Activated T-helper 1 cell treated with anti-CD3 and anti-CD28 coated beads, Interleukin-12 subunit alpha, Interleukin-12 subunit beta, Interleukin-2, Interleukin-4 antibody, amounts not matched to agents 30 ng/mL and 10 ng/mL and 1 ng/mL, durations not matched to agents 14 hours and 24 hours and 36 hours (primary cell): ENCODE measurements at regions of chr18 and their contacts with region 1.

Region 1: GRCh38 chr18:63422087-63422809 is at the start of gene VPS4B:
- DNase-seq: peak; percentile 100
- H3K4me3 Mint-ChIP-seq: peak within 1 kb of the TSS; percentile 91
- H3K27ac Mint-ChIP-seq: peak within 1 kb of the TSS; percentile 92
- H3K4me1 Mint-ChIP-seq: peaks cover 18% of the 10 kb centered on the region
- H3K27me3 Mint-ChIP-seq: no peaks in the 10 kb centered on the region
- total RNA-seq, gene VPS4B: 58.6 and 60.7 TPM in 2 replicates

Region 2: DNA sequence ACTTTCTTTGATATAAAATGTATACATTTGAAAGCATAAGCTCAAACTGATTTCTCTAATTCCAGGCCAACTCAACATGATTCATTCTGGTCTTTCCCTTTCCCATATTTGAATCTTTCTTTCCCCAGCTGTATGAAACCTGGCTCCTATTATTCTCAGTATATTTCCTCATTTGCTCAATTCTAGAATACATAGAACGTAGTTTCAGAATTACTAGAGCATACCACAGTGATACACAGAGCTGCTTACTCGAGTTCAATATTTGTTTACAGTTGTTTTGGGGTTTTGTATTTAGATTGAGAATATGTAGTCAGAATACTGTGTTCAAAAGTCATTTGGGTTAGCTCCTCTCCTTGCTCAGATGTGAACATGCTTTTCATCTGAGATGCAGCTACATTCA is 1054.1 kb before region 1 on chr18:
- intact Hi-C with region 1: loop called (anchors 1 kb)
- DNase-seq: no peak
- H3K4me3 Mint-ChIP-seq: peak overlapping the region; percentile 23
- H3K27ac Mint-ChIP-seq: peak overlapping the region; percentile 85
- H3K4me1 Mint-ChIP-seq: peaks cover 73% of the 10 kb centered on the region
- H3K27me3 Mint-ChIP-seq: no peaks in the 10 kb centered on the region

Region 3: DNA sequence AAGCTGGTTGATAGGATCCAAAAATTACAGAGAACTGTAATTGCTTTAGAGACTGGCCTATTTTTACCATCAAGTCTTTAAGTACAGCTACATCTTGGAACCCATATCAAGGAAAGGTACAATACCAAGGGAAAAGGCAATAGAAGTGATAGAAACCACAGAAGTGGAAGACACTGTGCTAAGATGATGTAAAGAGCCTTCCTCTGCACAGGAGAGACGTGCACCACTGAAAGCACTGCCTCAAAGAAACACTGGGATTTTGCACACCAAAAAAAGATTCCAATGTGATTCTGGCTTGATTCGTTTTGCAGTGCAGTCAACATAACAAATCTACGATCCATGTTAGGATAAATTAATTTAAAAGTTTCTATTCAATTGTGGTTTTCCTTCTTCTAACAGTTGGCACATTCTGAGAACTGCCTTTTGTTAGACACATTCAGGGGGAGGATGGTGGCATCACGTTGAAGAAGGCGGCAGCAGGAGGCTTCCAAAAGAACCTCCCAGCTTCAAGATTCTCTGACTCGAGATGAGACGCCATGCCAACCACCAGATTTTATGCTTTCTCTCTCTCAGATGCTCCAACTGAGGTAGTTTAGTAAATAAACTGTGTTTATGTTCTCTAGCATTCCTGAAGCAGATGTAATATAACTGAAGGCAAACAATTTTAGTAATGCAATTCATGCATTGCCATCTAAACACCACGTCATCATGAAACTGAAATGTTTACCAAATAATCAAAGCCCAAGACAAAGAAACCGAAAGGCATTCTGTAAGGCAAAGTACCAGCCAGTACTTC is 205.5 kb before region 1 on chr18:
- intact Hi-C with region 1: loop called (anchors 5 kb)
- DNase-seq: no peak
- H3K4me3 Mint-ChIP-seq: peak overlapping the region; percentile 67
- H3K27ac Mint-ChIP-seq: peak overlapping the region; percentile 89
- H3K4me1 Mint-ChIP-seq: peaks cover 94% of the 10 kb centered on the region
- H3K27me3 Mint-ChIP-seq: no peaks in the 10 kb centered on the region

Region 4: DNA sequence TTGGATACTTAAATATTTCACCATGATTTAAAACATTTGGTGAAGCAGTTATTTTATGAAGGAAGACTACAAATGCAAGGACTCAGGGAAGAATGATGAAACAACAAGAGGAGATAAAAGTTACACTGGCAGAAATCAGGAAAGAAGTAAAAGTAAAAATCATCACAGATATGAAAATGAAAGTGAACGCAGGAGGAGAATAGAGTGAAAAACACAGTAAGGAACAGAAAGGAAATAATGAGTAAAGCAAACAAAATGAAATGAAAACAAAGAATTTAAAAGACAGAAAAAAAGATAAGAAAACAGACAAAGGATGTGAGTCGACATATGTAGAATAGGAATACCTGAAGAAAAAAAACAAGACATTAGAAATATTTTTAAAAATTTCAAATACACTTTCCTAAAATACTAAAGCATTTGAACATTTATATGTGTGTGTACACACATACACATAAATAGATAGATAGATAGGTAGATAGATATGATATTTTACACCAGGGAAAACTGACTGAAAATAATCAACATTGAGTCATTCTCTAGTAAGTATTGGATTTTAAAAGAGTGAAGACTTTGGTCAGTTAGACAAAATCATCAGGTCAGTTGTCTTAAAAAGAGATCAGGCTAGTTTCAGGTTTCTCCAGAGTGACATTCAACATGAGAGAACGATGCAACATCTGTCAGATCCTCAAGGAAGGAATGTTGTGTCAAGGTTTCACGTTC is 43.2 kb before region 1 on chr18:
- intact Hi-C with region 1: loop called (anchors 1 kb)
- DNase-seq: no peak
- H3K4me3 Mint-ChIP-seq: peak overlapping the region; percentile 17
- H3K27ac Mint-ChIP-seq: peak overlapping the region; percentile 58
- H3K4me1 Mint-ChIP-seq: peaks cover 23% of the 10 kb centered on the region
- H3K27me3 Mint-ChIP-seq: no peaks in the 10 kb centered on the region

Region 5: GRCh38 chr18:63439334-63439733 is 17.1 kb after region 1 on chr18:
- intact Hi-C with region 1: loop called (anchors 1 kb)
- DNase-seq: peak; percentile 19
- H3K4me3 Mint-ChIP-seq: no peak overlapping the region
- H3K27ac Mint-ChIP-seq: no peak overlapping the region
- H3K4me1 Mint-ChIP-seq: peaks cover 6% of the 10 kb centered on the region
- H3K27me3 Mint-ChIP-seq: peaks cover 23% of the 10 kb centered on the region

Region 6: DNA sequence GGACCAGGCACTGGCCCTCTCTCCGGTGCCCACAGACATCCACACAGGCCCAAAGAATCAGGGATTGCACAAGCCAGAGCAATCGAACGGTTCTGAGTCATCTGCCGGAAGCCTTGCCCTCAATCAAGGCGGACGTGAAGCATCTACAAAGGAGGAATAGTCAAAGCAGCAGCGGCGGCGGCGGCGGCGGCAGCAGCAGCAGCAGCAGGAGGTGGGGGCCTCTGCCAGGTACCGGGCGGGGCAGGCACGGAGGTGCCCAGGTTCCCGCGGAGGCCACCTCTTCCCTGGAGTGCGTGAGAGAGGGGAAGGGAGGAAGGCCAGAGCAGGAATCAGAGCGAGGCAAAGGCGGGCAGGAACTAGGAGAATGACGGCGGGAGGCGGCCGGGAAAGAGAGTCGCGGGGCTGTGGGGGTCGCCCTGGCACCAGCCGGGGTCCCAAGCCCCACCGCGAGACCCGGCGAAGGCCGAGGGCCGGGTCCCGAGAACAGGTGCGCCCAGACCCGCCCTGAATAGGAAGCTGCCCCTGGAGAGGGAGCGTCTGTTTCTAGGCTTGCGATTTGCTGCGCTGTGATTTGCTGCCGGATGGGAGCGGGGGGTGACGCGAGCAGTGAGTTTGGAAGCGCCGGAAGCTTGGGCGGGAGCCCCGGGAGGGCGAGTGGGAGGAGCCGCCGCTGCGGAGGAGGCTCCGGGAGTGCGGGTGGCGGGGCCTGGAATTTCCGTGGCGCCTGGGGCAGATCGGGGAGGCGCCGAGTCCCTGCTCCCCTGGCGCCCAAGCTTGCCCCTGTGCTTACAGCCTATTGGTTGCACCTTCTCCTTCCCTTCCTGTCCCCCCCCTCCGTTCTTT is 547.9 kb after region 1 on chr18 and contains the start of gene SERPINB8:
- intact Hi-C with region 1: loop called (anchors 1 kb)
- DNase-seq: peak; percentile 74
- H3K4me3 Mint-ChIP-seq: peak within 1 kb of the TSS; percentile 97
- H3K27ac Mint-ChIP-seq: peak within 1 kb of the TSS; percentile 98
- H3K4me1 Mint-ChIP-seq: peaks cover 54% of the 10 kb centered on the region
- H3K27me3 Mint-ChIP-seq: no peaks in the 10 kb centered on the region
- total RNA-seq, gene SERPINB8: 22.8 and 25.7 TPM in 2 replicates